H1 (cell line): ENCODE measurements at regions of chr3 and their contacts with region 1.

Region 1: DNA sequence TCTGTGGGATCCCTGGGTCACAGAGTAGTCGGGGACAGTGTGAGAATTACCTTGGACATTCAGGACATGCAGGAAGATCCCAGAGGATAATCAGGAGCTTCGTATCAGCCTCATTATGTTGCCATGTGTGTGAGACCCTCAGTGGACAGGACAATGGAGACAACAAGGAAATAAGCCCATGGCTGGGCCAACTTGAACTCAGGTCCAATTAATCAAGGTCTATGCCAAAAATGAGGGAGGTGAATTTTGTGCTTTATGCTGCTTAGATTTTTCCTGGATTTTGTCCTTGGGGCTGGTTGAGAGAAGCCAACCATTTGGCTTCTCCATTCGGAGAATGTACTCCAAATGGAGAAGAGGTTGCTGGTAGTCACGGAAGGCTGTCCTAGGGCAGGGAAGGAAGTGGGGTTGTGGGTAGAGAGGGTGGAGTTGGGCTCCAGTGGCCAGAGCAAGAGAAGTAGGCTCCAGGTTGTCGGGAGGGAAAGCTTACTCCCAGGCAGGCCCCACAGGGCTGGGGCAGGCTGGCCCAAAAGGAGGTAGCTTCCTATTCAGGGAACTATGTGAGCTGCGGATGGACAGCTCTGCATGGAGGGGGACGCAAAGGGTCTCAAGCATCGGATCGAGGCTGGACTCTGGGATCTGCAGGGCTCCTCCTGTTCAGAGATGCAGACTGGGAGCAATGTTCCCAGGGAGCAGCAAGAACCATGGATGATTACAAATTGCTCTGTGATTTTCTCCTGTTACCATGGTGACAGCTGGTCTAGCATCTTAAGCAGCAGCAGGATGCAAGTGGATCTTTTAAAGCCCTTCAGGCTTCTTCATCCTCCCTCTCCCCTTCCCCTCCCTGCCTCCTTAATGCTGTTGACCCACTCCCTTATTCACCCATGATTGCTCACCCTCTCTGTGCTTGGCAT is 91.1 kb downstream of the WNT7A start:
- DNase-seq: no peak
- H3K4me3 ChIP-seq: no peak overlapping the region
- H3K27ac ChIP-seq: no peak overlapping the region
- H3K4me1 ChIP-seq: peaks cover 0 to 20% (median 9%) of the 10 kb centered on the region in 4 experiments; a peak in 5 of 7 replicates
- H3K27me3 ChIP-seq: peaks cover 0 to 3% (median 1%) of the 10 kb centered on the region in 4 experiments; a peak in 1 of 7 replicates
- CTCF ChIP-seq: no peak
- EP300 ChIP-seq: no peak
- POLR2A ChIP-seq: no peak
- RAD21 ChIP-seq: no peak

Region 2: DNA sequence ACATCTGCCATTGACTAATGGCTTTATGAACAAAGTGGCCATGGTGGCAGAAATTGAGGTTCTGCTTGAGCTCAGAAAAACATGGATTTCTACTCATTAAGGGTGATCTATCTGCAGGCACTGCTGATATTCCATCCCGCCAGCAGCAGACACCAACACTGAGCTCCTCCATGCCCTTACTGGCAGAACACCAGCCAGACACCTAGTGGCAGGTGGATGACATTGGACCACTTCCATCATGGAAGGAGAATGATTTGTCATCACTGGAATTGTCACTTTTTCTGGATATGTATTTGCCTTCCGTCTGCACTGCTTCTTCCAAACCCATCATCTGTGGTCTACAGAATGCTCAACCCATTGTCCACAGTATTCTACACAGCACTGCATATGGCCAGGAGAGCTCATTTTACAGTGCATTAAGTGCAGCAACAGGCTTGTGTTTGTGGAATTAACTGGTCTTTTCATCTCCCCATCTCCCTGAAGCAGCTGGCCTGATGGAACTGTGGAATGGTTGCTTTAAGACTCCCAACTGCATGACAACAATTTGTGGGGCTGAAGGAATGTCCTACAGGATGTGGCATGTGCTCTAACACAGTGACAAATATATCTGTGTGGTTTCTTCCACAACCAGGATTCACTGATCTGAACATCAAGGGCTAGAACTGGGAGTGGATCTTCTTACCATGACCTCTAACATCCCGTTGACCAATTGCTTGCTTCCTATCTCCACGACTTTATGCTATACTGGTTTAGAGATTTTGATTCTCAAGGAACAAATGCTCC is 12.3 kb before region 1 on chr3:
- CTCF ChIA-PET with region 1: interaction called, 26 read pairs
- POLR2A ChIA-PET with region 1: interaction called, 3 read pairs
- DNase-seq: no peak
- H3K4me3 ChIP-seq: no peak overlapping the region
- H3K27ac ChIP-seq: no peak overlapping the region
- H3K4me1 ChIP-seq: no peaks in the 10 kb centered on the region
- H3K27me3 ChIP-seq: no peaks in the 10 kb centered on the region
- CTCF ChIP-seq: peak in 2 of 3 experiments; percentile 43 to 61; a peak in 3 of 4 replicates
- EP300 ChIP-seq: no peak
- POLR2A ChIP-seq: no peak
- RAD21 ChIP-seq: peak; percentile 15 to 50; a peak in 2 of 4 replicates

Region 3: GRCh38 chr3:13818919-13819318 is 30.1 kb after region 1 on chr3:
- CTCF ChIA-PET with region 1: no interaction called
- POLR2A ChIA-PET with region 1: no interaction called
- DNase-seq: no peak
- H3K4me3 ChIP-seq: no peak overlapping the region
- H3K27ac ChIP-seq: no peak overlapping the region
- H3K4me1 ChIP-seq: peaks cover 0 to 2% (median 0%) of the 10 kb centered on the region in 4 experiments; a peak in 1 of 7 replicates
- H3K27me3 ChIP-seq: no peaks in the 10 kb centered on the region; a peak in 1 of 7 replicates
- CTCF ChIP-seq: no peak
- EP300 ChIP-seq: no peak
- POLR2A ChIP-seq: no peak
- RAD21 ChIP-seq: no peak

Region 4: GRCh38 chr3:14234251-14235002 is 445.6 kb after region 1 on chr3:
- CTCF ChIA-PET with region 1: no interaction called
- POLR2A ChIA-PET with region 1: no interaction called
- DNase-seq: no peak
- H3K4me3 ChIP-seq: no peak overlapping the region
- H3K27ac ChIP-seq: no peak overlapping the region
- H3K4me1 ChIP-seq: no peaks in the 10 kb centered on the region
- H3K27me3 ChIP-seq: no peaks in the 10 kb centered on the region
- CTCF ChIP-seq: no peak
- EP300 ChIP-seq: no peak
- POLR2A ChIP-seq: no peak
- RAD21 ChIP-seq: no peak